Activated CD8-positive, alpha-beta T cell treated with anti-CD3 and anti-CD28 coated beads, Interleukin-2, amount 10 ng/mL, durations not matched to agents 7 days and 5 days (primary cell): ENCODE measurements at regions of chrX and their contacts with region 1.

Region 1: DNA sequence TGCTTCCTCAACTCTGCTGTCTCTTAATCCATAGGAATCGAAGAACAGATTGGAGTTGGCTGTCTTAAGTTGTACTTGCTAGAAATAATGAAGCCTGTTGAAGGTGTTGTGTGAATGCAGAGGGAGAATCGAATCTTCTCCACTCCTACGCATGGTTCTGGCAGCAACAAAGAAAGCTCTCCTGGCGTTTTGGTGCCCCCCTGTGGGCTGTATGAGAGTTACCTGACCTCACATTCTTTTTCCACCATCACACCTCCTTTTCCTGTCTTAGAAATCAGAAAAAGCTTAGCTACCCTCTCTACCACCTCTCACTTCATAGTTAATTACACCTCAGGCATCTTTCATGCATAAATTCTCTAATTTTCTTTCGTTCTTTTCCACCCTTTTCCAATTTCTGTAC is 16.3 kb downstream of the KLF8 start:
- DNase-seq: peak; percentile 67
- ATAC-seq: peak; percentile 60
- H3K4me3 Mint-ChIP-seq: no peak overlapping the region
- H3K27ac Mint-ChIP-seq: no peak overlapping the region
- H3K4me1 Mint-ChIP-seq: peaks cover 7% of the 10 kb centered on the region
- H3K27me3 Mint-ChIP-seq: no peaks in the 10 kb centered on the region

Region 2: GRCh38 chrX:55907968-55908607 is 340.4 kb before region 1 on chrX:
- CTCF ChIA-PET with region 1: interaction called, 12 read pairs
- POLR2A ChIA-PET with region 1: interaction called, 3 read pairs
- DNase-seq: peak; percentile 69
- ATAC-seq: peak; percentile 74
- H3K4me3 Mint-ChIP-seq: peak overlapping the region; percentile 88
- H3K27ac Mint-ChIP-seq: peak overlapping the region; percentile 86
- H3K4me1 Mint-ChIP-seq: peaks cover 16% of the 10 kb centered on the region
- H3K27me3 Mint-ChIP-seq: peaks cover 2% of the 10 kb centered on the region

Region 3: DNA sequence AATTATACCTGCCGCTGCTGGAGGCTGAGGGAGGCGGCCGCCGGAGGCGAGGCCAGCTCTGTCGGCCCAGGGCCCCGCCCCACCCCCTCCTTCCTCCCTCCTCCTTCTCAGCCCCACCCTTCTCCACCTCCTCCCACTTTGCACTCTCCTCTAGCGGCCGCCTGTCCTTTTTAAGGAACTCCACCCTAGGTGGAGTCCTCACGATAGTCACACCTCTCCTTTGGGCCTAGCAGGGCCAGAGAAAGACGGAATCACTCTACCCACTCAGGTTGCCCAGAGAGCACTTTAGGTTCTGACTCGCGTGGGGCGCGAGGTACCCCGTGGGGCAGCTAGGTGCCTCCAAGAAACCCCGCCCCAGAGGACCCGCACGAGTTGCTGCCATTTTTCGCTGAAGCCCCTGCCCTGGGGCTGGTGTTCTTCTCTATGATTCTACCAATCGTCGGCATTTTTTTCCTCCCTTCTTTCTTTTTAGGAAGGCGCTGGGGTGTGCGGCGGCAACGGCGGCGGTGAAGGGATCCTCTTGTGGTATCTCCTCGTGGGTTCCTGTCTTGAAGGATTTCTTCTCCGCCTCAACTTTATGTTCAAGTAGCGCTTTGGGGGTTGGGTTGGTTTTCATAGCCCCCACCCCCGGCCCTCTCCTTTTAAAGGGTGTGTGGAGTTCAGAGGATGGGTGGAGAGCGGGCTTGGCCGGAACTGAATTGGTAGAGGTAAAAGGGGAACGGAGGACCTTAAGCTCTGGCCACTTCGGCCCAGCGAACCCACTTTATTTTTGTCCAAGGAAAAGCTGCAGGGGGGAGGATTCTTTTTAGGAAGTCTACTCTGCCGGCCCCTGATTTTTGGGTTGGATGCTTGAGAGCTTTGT is 16.0 kb before region 1 on chrX and contains the start of gene KLF8:
- CTCF ChIA-PET with region 1: interaction called, 17 read pairs
- POLR2A ChIA-PET with region 1: no interaction called
- DNase-seq: peak; percentile 57
- ATAC-seq: peak; percentile 92
- H3K4me3 Mint-ChIP-seq: peak within 1 kb of the TSS; percentile 73
- H3K27ac Mint-ChIP-seq: peak within 1 kb of the TSS; percentile 30
- H3K4me1 Mint-ChIP-seq: peaks cover 16% of the 10 kb centered on the region
- H3K27me3 Mint-ChIP-seq: peaks cover 16% of the 10 kb centered on the region
- total RNA-seq, gene KLF8: 2.8 TPM